ENCODE measurements at regions of chr4 and their contacts with region 1.

Region 1: GRCh38 chr4:36351082-36351666 is 69.8 kb downstream of the DTHD1 start:
- DNase-seq: peak in 4 of 5 donors; percentile 18 to 72 (median 46)
- ATAC-seq: no peak
- H3K4me3 ChIP-seq: no peak overlapping the region
- H3K27ac ChIP-seq: no peak overlapping the region
- H3K4me1 ChIP-seq: peaks cover 0 to 12% (median 0%) of the 10 kb centered on the region in 12 donors
- H3K27me3 ChIP-seq: no peaks in the 10 kb centered on the region
- CTCF ChIP-seq: peak; percentile 39 to 80 (median 60)
- POLR2A ChIP-seq: no peak

Region 2: DNA sequence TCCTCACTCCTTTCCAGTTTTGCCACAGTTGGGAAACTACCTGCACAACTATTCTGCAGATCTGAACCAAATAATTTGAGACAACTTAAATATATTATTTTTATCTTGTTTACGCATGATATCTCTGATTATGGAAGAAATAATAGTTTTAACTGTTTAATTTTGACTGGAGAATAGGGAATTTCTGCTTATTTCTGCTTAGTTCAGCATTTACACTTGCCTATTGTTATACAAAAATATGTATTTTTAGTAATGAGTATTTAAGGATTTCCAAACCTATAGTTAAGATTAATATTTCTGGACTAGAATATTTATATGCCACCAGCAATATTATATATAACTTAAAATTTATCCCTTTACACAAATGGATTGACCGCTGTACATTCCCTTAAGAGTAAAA is 1018.9 kb after region 1 on chr4:
- intact Hi-C with region 1: loop called in 1 of 10 experiments (anchors 10 kb)
- DNase-seq: no peak
- ATAC-seq: no peak
- H3K4me3 ChIP-seq: no peak overlapping the region
- H3K27ac ChIP-seq: no peak overlapping the region
- H3K4me1 ChIP-seq: no peaks in the 10 kb centered on the region
- H3K27me3 ChIP-seq: peaks cover 0 to 6% (median 0%) of the 10 kb centered on the region in 9 donors
- CTCF ChIP-seq: no peak
- POLR2A ChIP-seq: no peak

Region 3: GRCh38 chr4:37389967-37390580 is 1038.9 kb after region 1 on chr4:
- intact Hi-C with region 1: loop called in 6 of 10 experiments (anchors 5 to 10 kb)
- DNase-seq: no peak
- ATAC-seq: no peak
- H3K4me3 ChIP-seq: no peak overlapping the region
- H3K27ac ChIP-seq: no peak overlapping the region
- H3K4me1 ChIP-seq: peaks cover 0 to 28% (median 3%) of the 10 kb centered on the region in 12 donors
- H3K27me3 ChIP-seq: peaks cover 0 to 7% (median 0%) of the 10 kb centered on the region in 9 donors
- CTCF ChIP-seq: peak; percentile 66 to 82 (median 74)
- POLR2A ChIP-seq: no peak

Measured in heart left ventricle (tissue), 16 donors.